ENCODE measurements at regions of chr6 and their contacts with region 1.

Region 1: GRCh38 chr6:99330159-99330558 is 19.3 kb downstream of the FAXC start:
- DNase-seq: no peak
- H3K4me3 ChIP-seq: no peak overlapping the region
- H3K27me3 ChIP-seq: no peaks in the 10 kb centered on the region
- CTCF ChIP-seq: peak; percentile 84

Region 2: GRCh38 chr6:99312354-99312753 is 17.8 kb before region 1 on chr6:
- CTCF ChIA-PET with region 1: interaction called, 43 read pairs
- POLR2A ChIA-PET with region 1: no interaction called
- DNase-seq: no peak
- H3K4me3 ChIP-seq: no peak overlapping the region
- H3K27me3 ChIP-seq: no peaks in the 10 kb centered on the region
- CTCF ChIP-seq: no peak

Region 3: DNA sequence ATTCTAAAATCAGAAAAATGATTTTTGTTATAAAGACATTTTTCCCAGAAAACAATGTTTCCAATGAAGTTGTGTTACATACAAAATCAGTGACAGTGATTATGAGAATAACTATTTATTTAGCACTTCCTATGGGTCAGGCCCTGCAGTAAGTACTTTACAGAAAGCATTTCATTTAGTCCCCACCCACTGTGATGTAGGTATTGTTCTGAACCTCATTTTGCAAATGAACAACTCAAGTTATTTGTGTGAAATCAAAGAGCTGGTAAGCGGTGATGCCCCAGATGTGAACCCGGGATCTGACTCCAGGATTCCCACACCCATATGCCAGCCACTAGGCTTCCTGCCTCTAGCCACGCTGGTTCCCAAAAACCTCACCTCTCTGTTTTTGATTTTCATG is 11.6 kb before region 1 on chr6:
- CTCF ChIA-PET with region 1: interaction called, 43 read pairs
- POLR2A ChIA-PET with region 1: no interaction called
- DNase-seq: no peak
- H3K4me3 ChIP-seq: no peak overlapping the region
- H3K27me3 ChIP-seq: no peaks in the 10 kb centered on the region
- CTCF ChIP-seq: no peak

Region 4: DNA sequence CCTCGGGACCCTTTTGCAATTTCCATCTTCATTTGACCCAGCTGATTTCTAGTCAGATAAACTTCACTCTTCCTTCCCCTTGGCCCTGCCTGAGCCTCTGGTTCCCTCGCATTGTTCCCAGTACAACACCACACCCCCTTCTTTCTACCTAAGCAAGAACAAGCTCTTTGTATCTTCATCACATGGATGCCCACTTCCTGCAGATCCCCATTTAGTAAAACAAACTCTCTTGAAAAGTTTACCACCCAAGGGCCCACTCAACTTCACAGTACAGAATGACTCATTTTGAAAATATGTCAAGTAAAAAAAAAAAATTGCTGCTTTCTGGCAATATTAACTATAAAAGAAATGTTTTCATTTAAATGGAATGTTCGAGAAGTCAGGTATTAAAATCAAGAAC is 14.1 kb after region 1 on chr6:
- CTCF ChIA-PET with region 1: interaction called, 30 read pairs
- POLR2A ChIA-PET with region 1: no interaction called
- DNase-seq: no peak
- H3K4me3 ChIP-seq: no peak overlapping the region
- H3K27me3 ChIP-seq: no peaks in the 10 kb centered on the region
- CTCF ChIP-seq: no peak

Region 5: DNA sequence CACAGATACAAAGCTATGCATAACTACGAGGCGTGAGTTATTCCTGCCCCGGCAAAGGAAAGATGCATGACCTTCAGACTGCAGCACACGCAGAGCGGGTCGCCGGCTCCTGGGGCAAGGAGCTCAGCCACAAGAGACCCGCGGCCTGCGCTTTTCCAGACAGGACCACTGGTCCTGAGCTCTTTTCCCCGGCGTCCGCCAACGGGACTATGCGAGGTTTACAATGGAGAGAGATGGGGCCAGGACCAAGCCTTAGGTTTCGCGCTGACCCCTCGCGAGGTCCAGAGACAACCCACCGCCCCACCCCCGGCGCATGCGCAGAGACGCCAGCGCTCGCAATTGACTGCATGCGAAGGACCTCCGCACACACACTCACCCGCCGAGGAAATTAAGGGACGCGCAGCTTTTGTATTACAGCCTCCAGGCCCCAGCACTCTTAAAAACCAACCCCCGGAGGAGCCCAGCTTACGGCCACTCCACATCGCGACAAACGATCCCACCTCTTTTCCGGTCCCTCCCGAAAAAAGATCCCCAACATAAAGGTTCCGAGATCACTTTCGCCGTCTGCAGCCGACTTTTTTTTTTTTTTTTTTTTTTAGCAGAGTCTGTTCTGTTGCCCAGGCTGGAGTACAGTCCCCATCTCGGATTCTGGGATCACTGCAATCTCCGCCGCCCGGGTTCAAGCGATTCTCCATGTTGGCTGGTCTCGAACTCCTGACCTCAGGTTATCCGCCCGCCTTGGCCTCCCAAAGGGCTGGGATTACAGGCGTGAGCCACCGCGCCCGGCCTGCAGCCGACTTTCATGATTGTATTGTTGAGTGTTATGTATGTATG is 63.8 kb after region 1 on chr6 and contains the start of gene COQ3:
- CTCF ChIA-PET with region 1: interaction called, 10 read pairs
- POLR2A ChIA-PET with region 1: no interaction called
- DNase-seq: peak; percentile 19
- H3K4me3 ChIP-seq: peak within 1 kb of the TSS; percentile 64
- H3K27me3 ChIP-seq: no peaks in the 10 kb centered on the region
- CTCF ChIP-seq: no peak
- polyA plus RNA-seq, gene COQ3: 3.3 and 6.4 TPM in 2 replicates

Region 6: GRCh38 chr6:99431901-99432300 is 101.7 kb after region 1 on chr6:
- CTCF ChIA-PET with region 1: no interaction called
- POLR2A ChIA-PET with region 1: no interaction called
- DNase-seq: no peak
- H3K4me3 ChIP-seq: no peak overlapping the region
- H3K27me3 ChIP-seq: no peaks in the 10 kb centered on the region
- CTCF ChIP-seq: no peak

Region 7: GRCh38 chr6:99746261-99746895 is 416.2 kb after region 1 on chr6:
- CTCF ChIA-PET with region 1: interaction called, 20 read pairs
- POLR2A ChIA-PET with region 1: no interaction called
- DNase-seq: peak; percentile 35
- H3K4me3 ChIP-seq: no peak overlapping the region
- H3K27me3 ChIP-seq: no peaks in the 10 kb centered on the region
- CTCF ChIP-seq: peak; percentile 79